ENCODE measurements at regions of chr18 and their contacts with region 1.

Region 1: DNA sequence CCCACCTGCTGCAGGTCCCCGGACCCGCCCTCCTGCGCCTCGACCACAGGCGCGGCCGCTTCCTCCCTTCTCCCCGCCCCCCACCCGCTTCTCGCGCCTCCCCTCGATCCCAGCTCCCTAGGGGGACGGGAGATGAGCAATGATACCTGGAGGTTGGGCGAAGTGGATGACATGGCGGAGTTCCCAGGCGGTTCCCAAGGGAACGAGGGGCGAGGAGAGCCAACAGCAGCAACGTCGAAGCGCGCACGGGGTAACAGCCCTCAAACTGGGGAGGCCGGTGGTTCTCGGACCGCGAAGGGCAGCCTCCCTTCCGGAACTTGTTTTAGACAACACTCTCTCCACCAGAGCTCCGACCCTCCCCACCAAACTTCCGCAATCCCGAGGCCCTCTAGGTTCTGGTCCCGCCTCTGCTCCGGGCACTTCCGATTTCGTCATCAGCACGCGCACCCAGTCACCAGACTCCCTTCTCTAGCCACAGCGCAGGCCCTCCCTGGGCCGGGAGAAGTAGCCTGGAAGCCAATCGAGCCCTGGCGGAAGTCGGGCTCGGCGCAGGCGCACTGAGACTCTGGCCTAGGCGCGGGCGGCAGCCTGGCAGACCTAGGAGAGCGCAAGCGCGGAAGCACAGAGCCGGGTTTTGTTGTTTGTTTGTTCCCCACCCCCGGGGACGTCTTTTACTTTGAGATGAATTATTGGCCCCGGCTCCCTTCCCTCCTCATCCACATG is at the start of gene VPS4B:
- DNase-seq: peak; percentile 99 to 100 (median 99)
- ATAC-seq: peak; percentile 91
- H3K4me3 ChIP-seq: peak within 1 kb of the TSS; percentile 87 to 96
- H3K4me3 Mint-ChIP-seq: peak within 1 kb of the TSS; percentile 97
- H3K27ac ChIP-seq: peak within 1 kb of the TSS; percentile 94 to 97
- H3K27ac Mint-ChIP-seq: peak within 1 kb of the TSS; percentile 97
- H3K4me1 ChIP-seq: peaks cover 32% of the 10 kb centered on the region
- H3K4me1 Mint-ChIP-seq: peaks cover 30% of the 10 kb centered on the region
- H3K27me3 ChIP-seq: no peaks in the 10 kb centered on the region
- H3K27me3 Mint-ChIP-seq: no peaks in the 10 kb centered on the region
- CTCF ChIP-seq: no peak
- total RNA-seq, gene VPS4B: 58.5 to 76.2 TPM

Region 2: GRCh38 chr18:62505669-62506494 is 916.4 kb before region 1 on chr18:
- CTCF ChIA-PET with region 1: no interaction called
- POLR2A ChIA-PET with region 1: no interaction called
- intact Hi-C with region 1: loop called (anchors 5 kb)
- DNase-seq: peak in 6 of 9 experiments; percentile 7 to 74 (median 48)
- ATAC-seq: peak; percentile 70
- H3K4me3 ChIP-seq: peak overlapping the region; percentile 59 to 71
- H3K4me3 Mint-ChIP-seq: peak overlapping the region; percentile 90
- H3K27ac ChIP-seq: peak overlapping the region; percentile 59 to 79
- H3K27ac Mint-ChIP-seq: peak overlapping the region; percentile 96
- H3K4me1 ChIP-seq: peaks cover 15% of the 10 kb centered on the region
- H3K4me1 Mint-ChIP-seq: peaks cover 20% of the 10 kb centered on the region
- H3K27me3 ChIP-seq: no peaks in the 10 kb centered on the region
- H3K27me3 Mint-ChIP-seq: no peaks in the 10 kb centered on the region
- CTCF ChIP-seq: no peak

Region 3: GRCh38 chr18:63016270-63016669 is 406.0 kb before region 1 on chr18:
- CTCF ChIA-PET with region 1: interaction called, 3 read pairs
- POLR2A ChIA-PET with region 1: no interaction called
- intact Hi-C with region 1: loop called in 1 of 2 experiments (anchors 5 kb)
- DNase-seq: peak; percentile 11 to 79 (median 51)
- ATAC-seq: peak; percentile 77
- H3K4me3 ChIP-seq: no peak overlapping the region
- H3K4me3 Mint-ChIP-seq: no peak overlapping the region
- H3K27ac ChIP-seq: no peak overlapping the region
- H3K27ac Mint-ChIP-seq: no peak overlapping the region
- H3K4me1 ChIP-seq: no peaks in the 10 kb centered on the region
- H3K4me1 Mint-ChIP-seq: no peaks in the 10 kb centered on the region
- H3K27me3 ChIP-seq: no peaks in the 10 kb centered on the region
- H3K27me3 Mint-ChIP-seq: peaks cover 16% of the 10 kb centered on the region
- CTCF ChIP-seq: peak; percentile 90

Region 4: GRCh38 chr18:63161761-63162195 is 260.5 kb before region 1 on chr18:
- CTCF ChIA-PET with region 1: no interaction called
- POLR2A ChIA-PET with region 1: no interaction called
- intact Hi-C with region 1: loop called (anchors 1 to 5 kb)
- DNase-seq: peak; percentile 51 to 94 (median 78)
- ATAC-seq: peak; percentile 85
- H3K4me3 ChIP-seq: peak overlapping the region; percentile 17 to 30
- H3K4me3 Mint-ChIP-seq: peak overlapping the region; percentile 65
- H3K27ac ChIP-seq: peak overlapping the region; percentile 81 to 99
- H3K27ac Mint-ChIP-seq: peak overlapping the region; percentile 98
- H3K4me1 ChIP-seq: peaks cover 77% of the 10 kb centered on the region
- H3K4me1 Mint-ChIP-seq: peaks cover 91% of the 10 kb centered on the region
- H3K27me3 ChIP-seq: no peaks in the 10 kb centered on the region
- H3K27me3 Mint-ChIP-seq: no peaks in the 10 kb centered on the region
- CTCF ChIP-seq: no peak

Region 5: GRCh38 chr18:63410792-63411191 is 11.5 kb before region 1 on chr18:
- CTCF ChIA-PET with region 1: no interaction called
- POLR2A ChIA-PET with region 1: interaction called, 10 read pairs
- intact Hi-C with region 1: no loop called
- DNase-seq: no peak
- ATAC-seq: peak; percentile 34
- H3K4me3 ChIP-seq: no peak overlapping the region
- H3K4me3 Mint-ChIP-seq: no peak overlapping the region
- H3K27ac ChIP-seq: no peak overlapping the region
- H3K27ac Mint-ChIP-seq: peak overlapping the region; percentile 41
- H3K4me1 ChIP-seq: peaks cover 13% of the 10 kb centered on the region
- H3K4me1 Mint-ChIP-seq: peaks cover 53% of the 10 kb centered on the region
- H3K27me3 ChIP-seq: no peaks in the 10 kb centered on the region
- H3K27me3 Mint-ChIP-seq: no peaks in the 10 kb centered on the region
- CTCF ChIP-seq: no peak

Region 6: DNA sequence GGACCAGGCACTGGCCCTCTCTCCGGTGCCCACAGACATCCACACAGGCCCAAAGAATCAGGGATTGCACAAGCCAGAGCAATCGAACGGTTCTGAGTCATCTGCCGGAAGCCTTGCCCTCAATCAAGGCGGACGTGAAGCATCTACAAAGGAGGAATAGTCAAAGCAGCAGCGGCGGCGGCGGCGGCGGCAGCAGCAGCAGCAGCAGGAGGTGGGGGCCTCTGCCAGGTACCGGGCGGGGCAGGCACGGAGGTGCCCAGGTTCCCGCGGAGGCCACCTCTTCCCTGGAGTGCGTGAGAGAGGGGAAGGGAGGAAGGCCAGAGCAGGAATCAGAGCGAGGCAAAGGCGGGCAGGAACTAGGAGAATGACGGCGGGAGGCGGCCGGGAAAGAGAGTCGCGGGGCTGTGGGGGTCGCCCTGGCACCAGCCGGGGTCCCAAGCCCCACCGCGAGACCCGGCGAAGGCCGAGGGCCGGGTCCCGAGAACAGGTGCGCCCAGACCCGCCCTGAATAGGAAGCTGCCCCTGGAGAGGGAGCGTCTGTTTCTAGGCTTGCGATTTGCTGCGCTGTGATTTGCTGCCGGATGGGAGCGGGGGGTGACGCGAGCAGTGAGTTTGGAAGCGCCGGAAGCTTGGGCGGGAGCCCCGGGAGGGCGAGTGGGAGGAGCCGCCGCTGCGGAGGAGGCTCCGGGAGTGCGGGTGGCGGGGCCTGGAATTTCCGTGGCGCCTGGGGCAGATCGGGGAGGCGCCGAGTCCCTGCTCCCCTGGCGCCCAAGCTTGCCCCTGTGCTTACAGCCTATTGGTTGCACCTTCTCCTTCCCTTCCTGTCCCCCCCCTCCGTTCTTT is 547.9 kb after region 1 on chr18 and contains the start of gene SERPINB8:
- CTCF ChIA-PET with region 1: no interaction called
- POLR2A ChIA-PET with region 1: no interaction called
- intact Hi-C with region 1: loop called (anchors 1 to 10 kb)
- DNase-seq: peak; percentile 48 to 88 (median 79)
- ATAC-seq: peak; percentile 87
- H3K4me3 ChIP-seq: peak within 1 kb of the TSS; percentile 68 to 97
- H3K4me3 Mint-ChIP-seq: peak within 1 kb of the TSS; percentile 98
- H3K27ac ChIP-seq: peak within 1 kb of the TSS; percentile 78 to 92
- H3K27ac Mint-ChIP-seq: peak within 1 kb of the TSS; percentile 96
- H3K4me1 ChIP-seq: peaks cover 16% of the 10 kb centered on the region
- H3K4me1 Mint-ChIP-seq: peaks cover 41% of the 10 kb centered on the region
- H3K27me3 ChIP-seq: no peaks in the 10 kb centered on the region
- H3K27me3 Mint-ChIP-seq: no peaks in the 10 kb centered on the region
- CTCF ChIP-seq: no peak
- total RNA-seq, gene SERPINB8: 14.8 to 15.7 TPM

Measured in CD8-positive, alpha-beta T cell (primary cell).